ENCODE measurements at regions of chr11 and their contacts with region 1.

Region 1: GRCh38 chr11:76152086-76152681 is 54.1 kb downstream of the WNT11 start:
- DNase-seq: peak; percentile 64 to 73 (median 67)
- H3K4me3 ChIP-seq: peak overlapping the region in 1 of 2 donors; percentile 2
- H3K4me3 Mint-ChIP-seq: peak overlapping the region; percentile 71 to 86 (median 80)
- H3K27ac ChIP-seq: no peak overlapping the region
- H3K27ac Mint-ChIP-seq: peak overlapping the region in 4 of 7 donors; percentile 4 to 87 (median 49)
- H3K4me1 ChIP-seq: peaks cover 22% of the 10 kb centered on the region
- H3K4me1 Mint-ChIP-seq: peaks cover 16 to 28% (median 22%) of the 10 kb centered on the region in 4 donors
- H3K27me3 ChIP-seq: no peaks in the 10 kb centered on the region
- H3K27me3 Mint-ChIP-seq: peaks cover 0 to 2% of the 10 kb centered on the region in 2 donors

Region 2: DNA sequence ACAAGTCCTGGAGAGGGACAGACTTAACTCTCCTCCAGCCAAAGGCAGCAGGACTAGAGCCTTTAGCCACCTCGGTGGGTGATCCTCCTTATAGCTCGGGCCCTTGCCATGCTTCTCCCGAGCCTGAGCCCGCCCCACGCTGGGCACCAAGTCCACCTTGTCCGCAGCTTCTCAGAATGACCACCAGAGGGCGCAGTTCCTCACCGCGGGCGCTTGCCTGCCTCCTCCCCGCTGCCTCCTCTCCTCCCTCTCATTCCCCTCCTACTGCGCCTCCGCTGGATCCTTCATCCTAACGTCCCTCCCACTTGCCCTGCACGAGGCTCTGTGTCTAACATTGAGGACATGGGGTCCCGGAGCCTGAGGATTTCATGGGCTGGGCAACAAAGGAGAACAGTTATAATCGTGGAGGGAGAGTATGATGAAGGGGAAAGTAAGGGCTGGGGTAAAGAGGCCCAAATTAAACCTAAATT is 445.9 kb before region 1 on chr11:
- CTCF ChIA-PET with region 1: interaction called, 3 read pairs
- POLR2A ChIA-PET with region 1: no interaction called
- intact Hi-C with region 1: loop called (anchors 1 kb)
- DNase-seq: peak; percentile 47 to 59 (median 57)
- H3K4me3 ChIP-seq: no peak overlapping the region
- H3K4me3 Mint-ChIP-seq: peak overlapping the region in 4 of 8 donors; percentile 5 to 52 (median 49)
- H3K27ac ChIP-seq: no peak overlapping the region
- H3K27ac Mint-ChIP-seq: no peak overlapping the region
- H3K4me1 ChIP-seq: no peaks in the 10 kb centered on the region
- H3K4me1 Mint-ChIP-seq: peaks cover 0 to 11% (median 4%) of the 10 kb centered on the region in 4 donors
- H3K27me3 ChIP-seq: no peaks in the 10 kb centered on the region
- H3K27me3 Mint-ChIP-seq: peaks cover 2 to 10% of the 10 kb centered on the region in 2 donors

Region 3: DNA sequence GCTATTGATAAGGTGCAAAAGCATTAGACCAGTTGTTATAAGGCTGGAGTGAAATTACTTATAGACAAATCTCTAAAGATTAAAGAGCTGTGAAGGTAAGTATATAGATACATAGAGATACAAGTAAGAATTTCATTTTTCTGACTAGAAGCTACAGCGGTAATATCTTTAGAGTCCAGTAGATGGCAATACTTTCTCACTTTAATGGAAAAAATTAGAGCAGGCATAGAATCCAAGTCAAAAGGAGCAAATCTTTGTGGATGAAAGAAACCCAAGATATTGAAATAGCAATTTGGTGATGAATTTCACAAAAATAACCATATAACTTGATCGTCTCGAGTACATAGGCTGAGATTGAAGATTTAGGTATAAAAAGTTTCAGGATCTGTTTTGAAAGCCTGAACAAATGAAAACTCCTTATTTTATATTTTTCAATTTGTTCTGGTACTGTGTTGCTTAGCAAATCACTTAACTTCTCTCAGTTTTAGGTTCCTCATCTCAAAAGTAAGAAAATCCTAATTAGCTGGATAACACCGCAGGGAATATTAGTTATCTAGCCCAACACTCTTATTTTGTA is 255.3 kb before region 1 on chr11:
- CTCF ChIA-PET with region 1: interaction called, 105 read pairs
- POLR2A ChIA-PET with region 1: no interaction called
- intact Hi-C with region 1: loop called (anchors 1 kb)
- DNase-seq: peak in 4 of 5 donors; percentile 22 to 42 (median 30)
- H3K4me3 ChIP-seq: no peak overlapping the region
- H3K4me3 Mint-ChIP-seq: no peak overlapping the region
- H3K27ac ChIP-seq: no peak overlapping the region
- H3K27ac Mint-ChIP-seq: no peak overlapping the region
- H3K4me1 ChIP-seq: no peaks in the 10 kb centered on the region
- H3K4me1 Mint-ChIP-seq: peaks cover 0 to 4% (median 3%) of the 10 kb centered on the region in 4 donors
- H3K27me3 ChIP-seq: no peaks in the 10 kb centered on the region
- H3K27me3 Mint-ChIP-seq: no peaks in the 10 kb centered on the region

Region 4: GRCh38 chr11:76120513-76121101 is 31.6 kb before region 1 on chr11:
- CTCF ChIA-PET with region 1: interaction called, 11 read pairs
- POLR2A ChIA-PET with region 1: no interaction called
- intact Hi-C with region 1: no loop called
- DNase-seq: no peak
- H3K4me3 ChIP-seq: no peak overlapping the region
- H3K4me3 Mint-ChIP-seq: no peak overlapping the region
- H3K27ac ChIP-seq: no peak overlapping the region
- H3K27ac Mint-ChIP-seq: no peak overlapping the region
- H3K4me1 ChIP-seq: no peaks in the 10 kb centered on the region
- H3K4me1 Mint-ChIP-seq: peaks cover 0 to 4% (median 0%) of the 10 kb centered on the region in 4 donors
- H3K27me3 ChIP-seq: no peaks in the 10 kb centered on the region
- H3K27me3 Mint-ChIP-seq: no peaks in the 10 kb centered on the region

Region 5: DNA sequence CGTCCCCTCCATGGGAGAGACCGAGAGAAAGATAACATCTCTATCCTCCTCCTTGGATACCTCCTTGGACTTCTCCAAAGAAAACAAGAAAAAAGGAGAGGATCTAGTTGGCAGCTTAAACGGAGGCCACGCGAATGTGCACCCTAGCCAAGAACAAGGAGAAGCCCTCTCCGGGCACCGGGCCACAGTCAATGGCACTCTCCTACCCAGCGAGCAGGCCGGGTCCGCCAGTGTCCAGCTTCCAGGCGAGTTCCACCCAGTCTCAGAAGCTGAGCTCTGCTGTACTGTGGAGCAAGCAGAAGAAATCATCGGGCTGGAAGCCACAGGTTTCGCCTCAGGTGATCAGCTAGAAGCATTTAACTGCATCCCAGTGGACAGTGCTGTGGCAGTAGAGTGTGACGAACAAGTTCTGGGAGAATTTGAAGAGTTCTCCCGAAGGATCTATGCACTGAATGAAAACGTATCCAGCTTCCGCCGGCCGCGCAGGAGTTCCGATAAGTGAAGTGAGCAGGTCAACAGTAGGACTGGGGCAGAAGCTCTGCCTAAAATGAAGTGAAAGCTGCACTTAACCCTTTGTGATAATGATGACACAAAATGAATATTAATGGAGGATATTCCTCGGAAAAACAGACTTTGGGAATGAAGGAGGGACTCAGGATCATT is 11.1 kb before region 1 on chr11:
- CTCF ChIA-PET with region 1: interaction called, 24 read pairs
- POLR2A ChIA-PET with region 1: no interaction called
- intact Hi-C with region 1: no loop called
- DNase-seq: no peak
- H3K4me3 ChIP-seq: no peak overlapping the region
- H3K4me3 Mint-ChIP-seq: no peak overlapping the region
- H3K27ac ChIP-seq: no peak overlapping the region
- H3K27ac Mint-ChIP-seq: peak overlapping the region in 1 of 7 donors; percentile 41
- H3K4me1 ChIP-seq: no peaks in the 10 kb centered on the region
- H3K4me1 Mint-ChIP-seq: peaks cover 0 to 2% (median 0%) of the 10 kb centered on the region in 4 donors
- H3K27me3 ChIP-seq: no peaks in the 10 kb centered on the region
- H3K27me3 Mint-ChIP-seq: no peaks in the 10 kb centered on the region

Region 6: GRCh38 chr11:77171885-77172499 is 1019.8 kb after region 1 on chr11:
- CTCF ChIA-PET with region 1: no interaction called
- POLR2A ChIA-PET with region 1: no interaction called
- intact Hi-C with region 1: no loop called
- DNase-seq: no peak
- H3K4me3 ChIP-seq: no peak overlapping the region
- H3K4me3 Mint-ChIP-seq: no peak overlapping the region
- H3K27ac ChIP-seq: no peak overlapping the region
- H3K27ac Mint-ChIP-seq: no peak overlapping the region
- H3K4me1 ChIP-seq: no peaks in the 10 kb centered on the region
- H3K4me1 Mint-ChIP-seq: peaks cover 0 to 1% (median 0%) of the 10 kb centered on the region in 4 donors
- H3K27me3 ChIP-seq: no peaks in the 10 kb centered on the region
- H3K27me3 Mint-ChIP-seq: no peaks in the 10 kb centered on the region